ENCODE measurements at regions of chr3 and their contacts with region 1.

Region 1: GRCh38 chr3:50298836-50299637 is at the starts of genes HYAL3 and NAA80:
- DNase-seq: peak; percentile 99
- H3K4me3 ChIP-seq: peak within 1 kb of the TSS; percentile 84 to 87
- H3K27ac ChIP-seq: peak within 1 kb of the TSS; percentile 62 to 84; a peak in 3 of 4 replicates
- H3K4me1 ChIP-seq: peaks cover 10 to 38% of the 10 kb centered on the region in 2 experiments; a peak in 2 of 4 replicates
- H3K27me3 ChIP-seq: no peaks in the 10 kb centered on the region
- CTCF ChIP-seq: peak; percentile 31
- EP300 ChIP-seq: no peak
- RAD21 ChIP-seq: no peak
- polyA plus RNA-seq, gene HYAL3: 7.8 and 8.4 TPM in 2 replicates
- polyA plus RNA-seq, gene NAA80: 10.4 and 10.5 TPM in 2 replicates

Region 2: DNA sequence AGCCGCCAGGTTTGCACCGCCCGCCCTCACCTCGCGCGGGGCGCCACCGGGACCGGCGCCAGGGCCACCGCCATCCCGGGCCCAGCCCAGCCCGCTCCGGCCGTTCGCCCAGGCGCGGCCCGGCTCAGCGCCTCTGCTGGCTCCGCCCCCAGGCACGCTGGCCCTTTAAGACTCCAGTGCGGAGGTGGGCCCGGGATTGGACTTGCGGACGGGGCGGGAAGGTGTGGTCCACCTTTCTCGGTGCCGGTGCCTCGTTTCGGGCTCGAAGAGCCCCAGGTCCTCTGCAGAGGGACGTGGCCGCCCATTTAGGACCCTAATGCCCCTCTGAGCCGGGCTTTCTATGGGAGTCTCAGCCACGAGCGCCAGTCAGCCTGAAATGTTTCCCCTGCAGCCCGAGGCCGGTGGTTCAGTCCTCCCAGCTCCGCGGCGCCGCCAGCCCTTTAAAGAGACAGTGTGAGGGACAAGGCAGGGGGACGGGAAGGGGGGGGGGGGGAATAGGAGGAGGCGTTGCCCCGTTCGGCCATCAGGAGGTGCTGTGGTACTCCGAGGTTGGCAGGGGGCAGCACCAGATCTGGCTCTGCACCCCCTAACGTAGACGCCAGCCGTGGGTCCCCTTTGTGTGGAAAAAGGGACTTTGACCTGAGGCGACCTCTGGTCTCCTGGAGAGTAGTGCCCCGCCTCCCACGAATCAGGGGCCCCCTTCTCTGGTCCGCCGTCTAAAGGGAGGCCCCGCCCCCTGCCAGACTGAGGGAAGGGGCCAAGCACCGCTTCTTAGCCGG is 22.5 kb after region 1 on chr3:
- CTCF ChIA-PET with region 1: interaction called, 45 read pairs
- POLR2A ChIA-PET with region 1: interaction called, 3 read pairs
- DNase-seq: peak; percentile 96
- H3K4me3 ChIP-seq: peak overlapping the region; percentile 92 to 94
- H3K27ac ChIP-seq: peak overlapping the region; percentile 92 to 94
- H3K4me1 ChIP-seq: peaks cover 0 to 40% of the 10 kb centered on the region in 2 experiments; a peak in 2 of 4 replicates
- H3K27me3 ChIP-seq: no peaks in the 10 kb centered on the region
- CTCF ChIP-seq: peak; percentile 61
- EP300 ChIP-seq: peak in 1 of 2 experiments; percentile 70; a peak in 1 of 4 replicates
- RAD21 ChIP-seq: no peak

Region 3: DNA sequence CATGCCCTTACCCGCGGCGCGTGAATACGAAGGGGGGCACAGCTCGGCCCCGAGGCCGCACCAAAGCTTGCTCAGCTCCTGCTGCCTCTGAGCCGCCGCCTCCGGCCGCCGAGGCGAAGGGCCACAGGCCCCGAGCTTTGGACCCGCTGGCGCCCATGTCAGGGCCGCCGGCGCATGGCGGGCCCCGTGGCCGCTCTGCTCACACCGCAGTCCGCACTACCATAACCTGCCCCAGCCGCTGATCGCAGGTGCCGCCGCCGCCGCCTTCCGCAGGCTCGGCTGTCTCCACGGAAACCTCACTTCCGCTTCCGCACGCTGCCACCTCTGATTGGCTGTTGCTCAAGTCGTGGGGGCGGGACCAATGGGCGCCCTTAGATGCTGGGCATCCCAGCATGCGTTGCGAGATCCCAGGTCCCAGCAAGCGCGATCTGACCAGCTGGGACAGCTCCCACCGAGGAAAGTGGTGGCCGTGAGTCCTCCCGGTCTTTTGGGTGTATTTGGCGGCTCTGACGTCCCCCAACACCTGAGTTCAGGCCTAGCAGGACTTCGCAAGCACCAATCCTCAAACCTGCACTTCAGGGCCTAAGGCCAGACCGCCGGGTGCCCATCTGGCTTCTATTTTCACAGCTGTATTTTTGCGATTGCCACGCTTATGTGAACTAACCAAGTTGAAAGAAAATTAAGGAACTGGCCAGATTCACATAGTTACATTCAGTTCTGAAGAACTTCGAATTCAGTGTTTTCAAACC is 29.1 kb after region 1 on chr3 and contains the start of gene TUSC2:
- CTCF ChIA-PET with region 1: interaction called, 16 read pairs
- POLR2A ChIA-PET with region 1: interaction called, 5 read pairs
- DNase-seq: peak; percentile 97
- H3K4me3 ChIP-seq: peak within 1 kb of the TSS; percentile 88 to 97
- H3K27ac ChIP-seq: peak within 1 kb of the TSS; percentile 46 to 90
- H3K4me1 ChIP-seq: peaks cover 0 to 17% of the 10 kb centered on the region in 2 experiments; a peak in 2 of 4 replicates
- H3K27me3 ChIP-seq: no peaks in the 10 kb centered on the region
- CTCF ChIP-seq: no peak
- EP300 ChIP-seq: no peak
- RAD21 ChIP-seq: no peak
- polyA plus RNA-seq, gene TUSC2: 58.7 and 79.3 TPM in 2 replicates

Measured in SK-N-SH (cell line).